Activated CD4-positive, alpha-beta T cell treated with anti-CD3 and anti-CD28 coated beads for 36 hours (primary cell): ENCODE measurements at regions of chr17 and their contacts with region 1.

Region 1: GRCh38 chr17:32755045-32755805 is 121.7 kb downstream of the MYO1D start:
- DNase-seq: no peak
- ATAC-seq: peak; percentile 71
- H3K4me3 Mint-ChIP-seq: no peak overlapping the region
- H3K27ac Mint-ChIP-seq: no peak overlapping the region
- H3K4me1 Mint-ChIP-seq: peaks cover 16% of the 10 kb centered on the region
- H3K27me3 Mint-ChIP-seq: no peaks in the 10 kb centered on the region

Region 2: DNA sequence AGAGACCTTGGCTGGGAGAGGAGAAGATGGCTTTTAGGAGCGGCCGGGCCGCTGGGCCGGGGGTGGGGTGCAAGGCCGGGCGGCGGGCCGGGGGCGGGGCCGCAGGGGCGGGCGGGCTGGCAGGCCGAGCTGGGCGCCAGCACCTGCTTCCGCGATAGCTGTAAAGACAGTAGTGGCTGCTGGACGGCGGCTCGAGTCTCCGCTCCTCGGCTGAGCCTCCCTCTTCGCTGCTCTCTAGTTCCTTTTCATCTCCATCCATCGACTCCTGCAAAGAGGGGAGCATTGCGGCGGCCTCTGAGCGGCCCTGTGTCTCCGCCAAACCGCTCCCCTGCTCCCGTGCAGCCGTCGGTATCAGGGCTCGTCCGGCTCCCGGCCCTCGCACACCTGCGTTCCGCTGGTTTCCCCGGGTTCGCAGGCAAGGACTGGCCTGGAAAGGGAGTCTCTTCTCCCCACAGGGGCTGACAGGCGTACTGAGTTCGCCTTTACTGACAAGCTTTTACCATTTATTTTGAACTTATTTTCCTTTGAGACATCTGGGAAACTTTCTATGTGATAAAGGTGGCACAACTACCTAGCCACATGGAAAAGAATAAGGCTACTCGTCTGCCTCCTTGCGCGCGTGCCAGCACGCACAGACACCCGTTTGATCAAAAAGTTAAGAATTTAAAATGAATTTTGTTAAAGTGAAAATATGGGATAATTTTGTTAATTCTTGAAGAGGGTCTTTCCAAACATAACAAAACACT is 413.2 kb before region 1 on chr17 and contains the start of gene C17orf75:
- CTCF ChIA-PET with region 1: interaction called, 3 read pairs
- POLR2A ChIA-PET with region 1: no interaction called
- intact Hi-C with region 1: loop called in 1 of 2 experiments (anchors 5 kb)
- DNase-seq: peak; percentile 90
- ATAC-seq: peak; percentile 94
- H3K4me3 Mint-ChIP-seq: peak within 1 kb of the TSS; percentile 88
- H3K27ac Mint-ChIP-seq: peak within 1 kb of the TSS; percentile 96
- H3K4me1 Mint-ChIP-seq: peaks cover 17% of the 10 kb centered on the region
- H3K27me3 Mint-ChIP-seq: no peaks in the 10 kb centered on the region
- total RNA-seq, gene C17orf75: 21.9 to 34.0 TPM

Region 3: GRCh38 chr17:32486111-32486700 is 269.0 kb before region 1 on chr17:
- CTCF ChIA-PET with region 1: interaction called, 3 read pairs
- POLR2A ChIA-PET with region 1: no interaction called
- intact Hi-C with region 1: loop called (anchors 1 to 2 kb)
- DNase-seq: peak; percentile 82
- ATAC-seq: peak; percentile 71
- H3K4me3 Mint-ChIP-seq: peak overlapping the region; percentile 54
- H3K27ac Mint-ChIP-seq: no peak overlapping the region
- H3K4me1 Mint-ChIP-seq: peaks cover 48% of the 10 kb centered on the region
- H3K27me3 Mint-ChIP-seq: no peaks in the 10 kb centered on the region

Region 4: DNA sequence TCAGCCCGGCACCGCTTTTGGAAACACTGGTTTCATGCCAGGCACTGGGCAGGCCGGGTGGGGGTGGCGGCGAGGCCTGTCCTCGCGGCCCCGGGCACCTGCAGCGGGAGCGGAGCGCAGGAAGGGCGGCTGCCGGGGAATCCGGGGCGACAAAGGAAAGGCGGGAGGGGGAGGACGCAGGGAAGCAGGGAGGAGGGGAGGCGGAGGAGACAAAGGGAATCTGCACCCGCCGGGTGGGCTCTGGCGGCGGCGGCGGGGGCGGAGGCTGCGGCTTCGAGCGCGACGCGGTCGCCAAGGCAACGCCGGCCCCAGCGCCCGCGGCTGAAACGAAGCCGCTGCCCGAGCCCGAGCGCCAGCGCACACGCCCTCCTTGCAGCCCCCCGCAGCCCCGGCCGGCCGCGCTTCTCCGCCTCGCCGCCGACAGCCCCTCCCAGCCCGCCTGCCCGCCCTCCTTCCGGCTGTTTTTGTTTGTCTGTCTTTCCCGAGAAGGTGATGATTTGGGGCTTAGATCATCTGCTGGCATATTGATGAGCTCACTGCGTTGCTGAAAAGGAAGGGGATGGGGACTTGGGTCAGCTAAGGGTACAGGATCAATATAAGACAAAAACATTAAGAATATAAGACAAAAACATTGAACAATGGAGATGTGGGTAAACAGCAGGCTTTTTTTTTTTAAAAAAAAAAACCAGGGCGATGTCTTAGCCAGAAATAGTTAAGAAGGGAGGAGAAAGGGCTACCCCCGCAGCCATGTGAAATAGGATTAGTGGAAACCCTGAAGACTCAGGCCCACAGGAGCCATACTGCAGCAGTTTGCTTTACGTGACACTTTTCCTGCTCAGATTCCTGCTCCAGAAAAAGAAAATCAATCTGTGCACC is 235.8 kb before region 1 on chr17:
- CTCF ChIA-PET with region 1: no interaction called
- POLR2A ChIA-PET with region 1: no interaction called
- intact Hi-C with region 1: no loop called
- DNase-seq: peak; percentile 82
- ATAC-seq: peak; percentile 5
- H3K4me3 Mint-ChIP-seq: peak overlapping the region; percentile 70
- H3K27ac Mint-ChIP-seq: peak overlapping the region; percentile 92
- H3K4me1 Mint-ChIP-seq: peaks cover 89% of the 10 kb centered on the region
- H3K27me3 Mint-ChIP-seq: no peaks in the 10 kb centered on the region

Region 5: DNA sequence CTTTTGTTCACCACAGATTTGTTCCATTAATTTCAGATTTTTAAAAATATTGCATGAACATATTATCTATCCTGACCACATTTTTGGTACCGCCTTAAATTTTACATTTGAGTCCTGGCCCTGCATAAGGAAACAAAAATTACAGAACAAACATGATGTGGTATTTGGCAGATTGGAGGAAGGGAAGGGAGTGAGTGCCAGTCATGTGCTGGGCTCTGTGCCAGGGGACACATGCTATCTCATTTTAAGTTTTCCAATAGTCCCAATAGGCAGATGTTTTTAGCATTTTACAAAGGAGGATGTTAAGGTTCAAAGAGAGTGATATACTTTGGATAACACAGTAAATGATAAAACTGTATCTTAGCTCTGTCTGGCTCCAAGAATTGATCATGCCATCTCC is 83.3 kb before region 1 on chr17:
- CTCF ChIA-PET with region 1: interaction called, 3 read pairs
- POLR2A ChIA-PET with region 1: no interaction called
- intact Hi-C with region 1: loop called in 1 of 2 experiments (anchors 5 kb)
- DNase-seq: no peak
- ATAC-seq: no peak
- H3K4me3 Mint-ChIP-seq: no peak overlapping the region
- H3K27ac Mint-ChIP-seq: no peak overlapping the region
- H3K4me1 Mint-ChIP-seq: no peaks in the 10 kb centered on the region
- H3K27me3 Mint-ChIP-seq: no peaks in the 10 kb centered on the region

Region 6: DNA sequence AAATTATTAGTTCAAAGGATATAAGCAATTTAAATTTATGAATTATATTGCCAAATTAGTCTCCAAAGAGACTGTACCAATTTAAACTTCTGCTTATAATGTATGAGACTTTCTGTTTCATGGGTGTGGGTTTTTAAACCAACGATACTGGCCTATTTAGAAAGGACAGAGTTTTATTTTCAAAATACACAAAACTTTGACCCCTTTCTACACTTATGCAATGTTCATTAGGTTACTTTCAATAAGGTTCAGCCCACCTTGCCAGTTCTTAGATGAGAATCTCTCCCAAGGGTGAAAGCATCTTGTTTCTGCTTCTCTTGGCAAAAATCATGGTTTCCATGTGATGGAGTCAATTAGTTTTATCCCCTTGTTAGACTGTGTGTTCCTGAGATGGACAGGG is 37.0 kb after region 1 on chr17:
- CTCF ChIA-PET with region 1: no interaction called
- POLR2A ChIA-PET with region 1: no interaction called
- intact Hi-C with region 1: no loop called
- DNase-seq: no peak
- ATAC-seq: no peak
- H3K4me3 Mint-ChIP-seq: no peak overlapping the region
- H3K27ac Mint-ChIP-seq: no peak overlapping the region
- H3K4me1 Mint-ChIP-seq: no peaks in the 10 kb centered on the region
- H3K27me3 Mint-ChIP-seq: no peaks in the 10 kb centered on the region

Region 7: GRCh38 chr17:32854207-32854606 is 99.0 kb after region 1 on chr17:
- CTCF ChIA-PET with region 1: no interaction called
- POLR2A ChIA-PET with region 1: no interaction called
- intact Hi-C with region 1: no loop called
- DNase-seq: no peak
- ATAC-seq: no peak
- H3K4me3 Mint-ChIP-seq: no peak overlapping the region
- H3K27ac Mint-ChIP-seq: no peak overlapping the region
- H3K4me1 Mint-ChIP-seq: no peaks in the 10 kb centered on the region
- H3K27me3 Mint-ChIP-seq: peaks cover 5% of the 10 kb centered on the region